ENCODE measurements at regions of chr9 and their contacts with region 1.

Region 1: DNA sequence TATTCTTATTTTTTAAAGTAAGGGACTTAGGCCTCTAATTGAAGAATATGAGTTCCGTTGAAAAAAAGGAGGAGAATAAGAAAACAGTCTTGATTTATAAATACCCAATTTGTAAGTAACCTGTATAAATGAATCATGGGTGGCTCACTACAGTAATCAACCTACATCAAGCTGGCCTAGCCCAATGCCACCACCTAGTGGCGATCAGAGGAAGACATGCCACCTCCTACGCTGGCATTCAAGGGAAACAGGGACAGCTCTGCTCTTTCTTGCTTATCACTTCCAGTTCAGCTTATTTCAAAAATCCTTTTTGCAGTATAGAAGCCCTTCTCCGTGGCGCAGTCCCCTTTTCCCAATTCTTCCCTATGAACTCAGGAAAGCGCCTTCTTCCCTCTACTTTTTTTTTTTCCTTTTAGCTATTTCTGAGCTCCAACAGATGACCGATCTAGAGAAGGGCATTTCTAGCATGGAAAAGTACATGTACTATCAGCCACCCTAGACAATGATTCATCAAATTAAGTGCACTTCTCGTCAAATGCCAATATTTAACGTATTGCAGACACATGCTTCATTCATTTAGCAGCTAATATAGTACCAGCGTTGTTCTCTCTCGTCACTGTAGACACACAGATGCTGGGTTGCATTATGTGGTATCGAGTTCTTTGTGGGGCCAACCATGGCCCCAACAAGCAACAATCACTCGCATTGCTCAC is 28.3 kb downstream of the PTPN3 start:
- DNase-seq: peak; percentile 70 to 78
- H3K4me3 ChIP-seq: no peak overlapping the region
- H3K4me3 Mint-ChIP-seq: no peak overlapping the region
- H3K27ac Mint-ChIP-seq: no peak overlapping the region
- H3K4me1 ChIP-seq: no peaks in the 10 kb centered on the region
- H3K4me1 Mint-ChIP-seq: peaks cover 5% of the 10 kb centered on the region
- H3K27me3 ChIP-seq: no peaks in the 10 kb centered on the region
- H3K27me3 Mint-ChIP-seq: no peaks in the 10 kb centered on the region
- CTCF ChIP-seq: peak; percentile 90 to 92

Region 2: GRCh38 chr9:108951578-108951977 is 518.2 kb before region 1 on chr9:
- CTCF ChIA-PET with region 1: no interaction called
- POLR2A ChIA-PET with region 1: no interaction called
- intact Hi-C with region 1: no loop called
- DNase-seq: no peak
- H3K4me3 ChIP-seq: no peak overlapping the region
- H3K4me3 Mint-ChIP-seq: no peak overlapping the region
- H3K27ac Mint-ChIP-seq: no peak overlapping the region
- H3K4me1 ChIP-seq: no peaks in the 10 kb centered on the region
- H3K4me1 Mint-ChIP-seq: peaks cover under 1% of the 10 kb centered on the region
- H3K27me3 ChIP-seq: no peaks in the 10 kb centered on the region
- H3K27me3 Mint-ChIP-seq: no peaks in the 10 kb centered on the region
- CTCF ChIP-seq: no peak

Region 3: GRCh38 chr9:109426626-109427402 is 43.0 kb before region 1 on chr9:
- CTCF ChIA-PET with region 1: no interaction called
- POLR2A ChIA-PET with region 1: no interaction called
- intact Hi-C with region 1: no loop called
- DNase-seq: no peak
- H3K4me3 ChIP-seq: no peak overlapping the region
- H3K4me3 Mint-ChIP-seq: no peak overlapping the region
- H3K27ac Mint-ChIP-seq: no peak overlapping the region
- H3K4me1 ChIP-seq: no peaks in the 10 kb centered on the region
- H3K4me1 Mint-ChIP-seq: no peaks in the 10 kb centered on the region
- H3K27me3 ChIP-seq: no peaks in the 10 kb centered on the region
- H3K27me3 Mint-ChIP-seq: no peaks in the 10 kb centered on the region
- CTCF ChIP-seq: no peak

Region 4: GRCh38 chr9:109440797-109441287 is 29.0 kb before region 1 on chr9:
- CTCF ChIA-PET with region 1: interaction called, 27 read pairs
- POLR2A ChIA-PET with region 1: no interaction called
- intact Hi-C with region 1: loop called (anchors 1 kb)
- DNase-seq: peak; percentile 66 to 67
- H3K4me3 ChIP-seq: no peak overlapping the region
- H3K4me3 Mint-ChIP-seq: no peak overlapping the region
- H3K27ac Mint-ChIP-seq: peak overlapping the region; percentile 70
- H3K4me1 ChIP-seq: no peaks in the 10 kb centered on the region
- H3K4me1 Mint-ChIP-seq: no peaks in the 10 kb centered on the region
- H3K27me3 ChIP-seq: no peaks in the 10 kb centered on the region
- H3K27me3 Mint-ChIP-seq: no peaks in the 10 kb centered on the region
- CTCF ChIP-seq: peak; percentile 79 to 80

Region 5: GRCh38 chr9:109875495-109876129 is 405.8 kb after region 1 on chr9:
- CTCF ChIA-PET with region 1: no interaction called
- POLR2A ChIA-PET with region 1: no interaction called
- intact Hi-C with region 1: no loop called
- DNase-seq: no peak
- H3K4me3 ChIP-seq: no peak overlapping the region
- H3K4me3 Mint-ChIP-seq: no peak overlapping the region
- H3K27ac Mint-ChIP-seq: no peak overlapping the region
- H3K4me1 ChIP-seq: no peaks in the 10 kb centered on the region
- H3K4me1 Mint-ChIP-seq: no peaks in the 10 kb centered on the region
- H3K27me3 ChIP-seq: no peaks in the 10 kb centered on the region
- H3K27me3 Mint-ChIP-seq: peaks cover 10% of the 10 kb centered on the region
- CTCF ChIP-seq: no peak